ENCODE measurements at regions of chr2 and their contacts with region 1.

Region 1: DNA sequence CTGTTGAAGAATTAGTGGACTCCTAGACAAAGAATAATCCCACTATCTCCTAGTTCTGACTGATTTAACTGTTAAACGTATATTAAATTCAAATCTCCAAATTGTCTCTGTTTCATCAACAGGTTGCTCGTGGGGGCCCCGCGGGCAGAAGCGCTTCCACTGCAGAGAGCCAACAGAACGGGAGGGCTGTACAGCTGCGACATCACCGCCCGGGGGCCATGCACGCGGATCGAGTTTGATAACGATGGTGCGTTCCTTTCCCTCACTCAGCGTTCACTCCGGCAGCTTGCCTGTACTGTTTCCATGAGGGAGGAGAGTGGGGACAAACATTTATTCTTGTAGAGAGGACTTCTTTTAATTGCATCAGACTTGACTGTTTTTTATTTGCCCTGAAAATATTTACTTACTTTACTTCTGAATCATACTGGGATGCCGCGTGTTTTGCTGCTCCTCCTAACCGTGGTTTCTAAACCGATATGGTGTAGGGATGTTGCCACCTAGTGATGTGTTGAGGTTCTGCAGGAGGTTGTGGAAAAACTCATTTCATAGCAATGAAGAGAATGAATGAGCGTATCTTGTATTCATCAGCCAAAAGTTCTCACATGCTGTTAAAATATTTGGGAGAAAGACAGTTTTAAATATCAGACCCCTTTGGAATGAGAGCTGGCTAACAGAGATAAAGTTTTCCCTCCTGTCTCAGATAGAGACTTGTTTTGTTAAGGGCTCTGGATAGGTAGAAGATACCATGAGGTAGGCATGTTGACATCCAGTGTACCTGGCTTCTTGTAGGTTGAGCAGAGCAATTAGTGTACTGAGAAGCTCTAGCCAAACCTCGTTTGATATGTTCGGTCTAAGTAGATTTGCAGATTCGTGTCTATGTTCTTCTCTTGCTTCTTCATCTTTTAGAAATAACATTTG is 38.3 kb downstream of the ITGA6 start:
- DNase-seq: peak; percentile 80
- H3K4me3 Mint-ChIP-seq: no peak overlapping the region
- H3K27ac Mint-ChIP-seq: peak overlapping the region; percentile 18
- H3K4me1 Mint-ChIP-seq: peaks cover 56% of the 10 kb centered on the region
- H3K27me3 Mint-ChIP-seq: no peaks in the 10 kb centered on the region

Region 2: DNA sequence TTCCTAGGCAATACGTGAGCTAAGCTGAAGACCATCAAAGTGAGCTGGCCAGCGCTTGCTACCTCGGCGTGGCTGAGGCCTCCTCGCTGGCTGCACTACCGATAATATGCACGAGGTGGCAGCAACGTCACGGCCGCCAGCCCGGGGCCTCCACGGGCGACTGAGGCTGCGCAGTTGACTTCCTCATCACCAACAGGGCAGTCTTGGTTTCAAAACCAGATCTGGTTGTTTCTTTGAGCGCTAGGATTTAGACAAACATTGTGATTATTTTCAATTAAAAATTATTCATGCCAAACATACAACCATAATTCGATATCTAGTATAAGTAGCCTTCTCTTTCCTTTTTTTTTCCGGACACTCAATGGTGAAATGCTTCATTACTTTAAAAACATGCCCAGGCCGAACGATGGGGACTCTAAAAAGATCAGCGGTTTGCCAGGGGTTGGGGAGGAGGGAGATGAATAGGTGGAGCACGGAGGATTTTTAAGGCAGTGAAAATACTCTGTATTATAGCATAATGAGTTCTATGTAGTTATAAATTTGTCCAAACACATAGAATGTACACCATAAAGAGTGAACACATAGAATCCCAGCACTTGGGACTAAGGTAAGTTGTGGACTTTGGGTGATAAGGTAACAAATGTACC is 891.4 kb before region 1 on chr2:
- CTCF ChIA-PET with region 1: interaction called, 8 read pairs
- POLR2A ChIA-PET with region 1: no interaction called
- intact Hi-C with region 1: loop called (anchors 10 kb)
- DNase-seq: peak; percentile 90
- H3K4me3 Mint-ChIP-seq: no peak overlapping the region
- H3K27ac Mint-ChIP-seq: no peak overlapping the region
- H3K4me1 Mint-ChIP-seq: peaks cover 7% of the 10 kb centered on the region
- H3K27me3 Mint-ChIP-seq: peaks cover 2% of the 10 kb centered on the region

Region 3: GRCh38 chr2:172102391-172103278 is 363.0 kb before region 1 on chr2 and contains the start of gene DLX2:
- CTCF ChIA-PET with region 1: interaction called, 5 read pairs
- POLR2A ChIA-PET with region 1: no interaction called
- intact Hi-C with region 1: loop called (anchors 2 kb)
- DNase-seq: peak; percentile 81
- H3K4me3 Mint-ChIP-seq: peak within 1 kb of the TSS; percentile 71
- H3K27ac Mint-ChIP-seq: no peak within 1 kb of the TSS
- H3K4me1 Mint-ChIP-seq: peaks cover 50% of the 10 kb centered on the region
- H3K27me3 Mint-ChIP-seq: peaks cover 70% of the 10 kb centered on the region
- total RNA-seq, gene DLX2: not detected

Region 4: GRCh38 chr2:172220121-172220520 is 245.6 kb before region 1 on chr2:
- CTCF ChIA-PET with region 1: interaction called, 11 read pairs
- POLR2A ChIA-PET with region 1: no interaction called
- intact Hi-C with region 1: no loop called
- DNase-seq: no peak
- H3K4me3 Mint-ChIP-seq: no peak overlapping the region
- H3K27ac Mint-ChIP-seq: no peak overlapping the region
- H3K4me1 Mint-ChIP-seq: peaks cover 33% of the 10 kb centered on the region
- H3K27me3 Mint-ChIP-seq: no peaks in the 10 kb centered on the region

Region 5: GRCh38 chr2:172285010-172285621 is 180.6 kb before region 1 on chr2:
- CTCF ChIA-PET with region 1: interaction called, 11 read pairs
- POLR2A ChIA-PET with region 1: no interaction called
- intact Hi-C with region 1: no loop called
- DNase-seq: no peak
- H3K4me3 Mint-ChIP-seq: no peak overlapping the region
- H3K27ac Mint-ChIP-seq: no peak overlapping the region
- H3K4me1 Mint-ChIP-seq: peaks cover 18% of the 10 kb centered on the region
- H3K27me3 Mint-ChIP-seq: no peaks in the 10 kb centered on the region

Region 6: DNA sequence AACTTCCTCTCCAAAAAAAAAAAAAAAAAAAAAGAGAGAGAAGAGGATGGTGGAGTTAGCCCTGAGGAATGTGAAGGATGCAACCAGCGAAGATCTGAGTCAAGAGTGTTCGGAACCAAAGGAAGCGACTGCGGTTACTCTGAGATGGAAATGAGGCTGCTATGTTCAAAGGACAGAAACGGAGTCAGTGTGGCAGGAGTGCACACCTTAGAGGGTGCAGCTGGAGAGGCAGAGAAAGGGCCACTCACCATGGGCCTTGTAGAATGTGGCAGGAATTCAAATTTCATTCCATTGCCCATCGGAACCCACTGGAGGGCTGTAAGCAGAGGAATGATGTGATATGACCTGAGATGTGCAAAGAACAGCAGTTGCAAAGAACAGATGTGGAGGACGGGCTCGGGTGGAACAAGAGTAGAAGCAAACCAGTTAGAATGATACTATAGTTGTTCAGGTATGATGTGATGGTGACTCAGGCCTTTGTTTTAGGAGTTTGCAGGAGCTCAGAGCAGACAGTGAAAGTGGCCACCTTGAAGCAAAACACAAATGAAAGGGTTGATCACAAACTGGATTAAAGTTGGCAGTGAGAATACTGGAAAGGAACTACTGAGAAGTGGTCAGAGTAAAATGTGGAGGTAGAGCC is 15.6 kb before region 1 on chr2:
- CTCF ChIA-PET with region 1: interaction called, 52 read pairs
- POLR2A ChIA-PET with region 1: interaction called, 6 read pairs
- intact Hi-C with region 1: no loop called
- DNase-seq: peak; percentile 35
- H3K4me3 Mint-ChIP-seq: no peak overlapping the region
- H3K27ac Mint-ChIP-seq: peak overlapping the region; percentile 2
- H3K4me1 Mint-ChIP-seq: peaks cover 59% of the 10 kb centered on the region
- H3K27me3 Mint-ChIP-seq: no peaks in the 10 kb centered on the region

Region 7: GRCh38 chr2:172596776-172597175 is 131.1 kb after region 1 on chr2:
- CTCF ChIA-PET with region 1: no interaction called
- POLR2A ChIA-PET with region 1: no interaction called
- intact Hi-C with region 1: no loop called
- DNase-seq: no peak
- H3K4me3 Mint-ChIP-seq: no peak overlapping the region
- H3K27ac Mint-ChIP-seq: no peak overlapping the region
- H3K4me1 Mint-ChIP-seq: peaks cover 1% of the 10 kb centered on the region
- H3K27me3 Mint-ChIP-seq: no peaks in the 10 kb centered on the region

Measured in activated CD4-positive, alpha-beta memory T cell treated with anti-CD3 and anti-CD28 coated beads for 36 hours (primary cell).